ENCODE measurements at regions of chr1 and their contacts with region 1.

Region 1: DNA sequence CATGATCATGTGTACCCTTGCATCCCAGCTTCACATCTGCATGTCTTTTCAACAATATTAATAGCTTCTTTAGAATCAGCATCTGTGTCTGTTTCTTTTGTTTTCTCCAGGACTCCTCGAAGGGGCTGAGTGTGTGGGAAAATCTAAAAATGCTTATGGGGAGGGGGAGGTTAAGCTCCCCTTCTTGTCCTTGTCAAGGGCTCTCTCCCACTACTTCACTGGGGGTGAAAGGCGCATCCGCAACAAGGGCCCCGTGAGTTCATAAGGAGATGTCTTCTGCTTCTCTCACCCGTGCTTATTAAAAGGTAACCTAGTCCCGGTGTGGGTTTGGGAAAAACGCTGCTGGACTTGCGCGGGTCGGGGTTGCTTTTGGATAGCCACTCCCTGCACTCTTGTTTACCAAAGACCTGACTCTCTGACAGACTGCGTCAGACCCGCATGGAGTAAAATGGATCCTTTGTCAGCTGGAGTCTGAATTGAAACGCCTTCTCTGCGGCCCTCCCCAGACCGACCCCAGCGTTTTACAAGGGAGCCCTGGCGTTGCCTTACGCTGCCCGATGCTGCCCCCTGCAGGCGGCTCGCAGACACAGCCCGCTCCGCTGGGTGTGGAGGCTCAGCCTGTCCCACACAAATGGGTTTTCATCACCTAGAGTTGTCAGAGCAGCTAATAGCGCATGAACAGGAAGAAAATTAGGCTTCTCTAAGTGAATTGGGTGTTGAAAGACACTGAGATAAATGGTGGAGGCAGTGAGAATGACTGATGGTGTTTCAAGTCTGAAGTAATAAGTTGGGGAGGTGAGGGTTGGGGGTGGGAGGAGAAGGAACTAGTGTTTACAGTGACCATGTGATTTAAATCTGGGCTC is 53.8 kb downstream of the IER5 start:
- DNase-seq: peak; percentile 23
- H3K4me3 ChIP-seq: 0 out of 2 replicates have a peak overlapping the region, but pooled peaks have one; percentile 3
- H3K27me3 ChIP-seq: no peaks in the 10 kb centered on the region
- CTCF ChIP-seq: peak; percentile 98

Region 2: DNA sequence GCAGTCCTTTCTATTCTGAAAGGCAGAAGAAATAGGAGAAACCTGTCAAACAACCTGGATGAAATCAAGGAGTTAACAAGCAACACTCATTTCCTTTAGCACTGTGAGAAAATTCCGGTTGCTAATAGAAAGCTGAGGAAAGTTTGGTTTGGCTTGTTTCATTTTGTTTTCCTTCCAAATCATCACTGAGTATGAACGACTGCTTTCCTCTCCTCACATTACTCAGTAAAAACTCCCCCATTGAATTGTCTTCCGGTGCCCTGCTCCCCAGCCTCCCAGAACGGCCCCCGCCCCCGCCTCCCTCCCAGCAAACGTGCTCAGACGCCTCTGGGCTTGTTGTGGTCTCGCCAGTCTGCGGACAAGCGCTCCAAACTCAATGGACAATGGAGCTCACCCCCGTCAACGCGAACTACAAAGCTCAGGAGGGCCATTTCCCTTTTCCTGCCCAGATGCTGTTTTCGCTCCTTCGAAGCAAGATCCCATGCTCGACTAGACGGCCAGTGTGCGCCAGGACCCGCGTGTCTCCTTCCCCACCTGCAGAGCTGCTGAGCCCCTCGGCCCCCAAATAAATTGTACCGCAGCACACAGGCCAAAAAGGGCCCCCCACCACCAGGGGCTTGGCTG is 120.4 kb before region 1 on chr1:
- CTCF ChIA-PET with region 1: interaction called, 23 read pairs
- POLR2A ChIA-PET with region 1: no interaction called
- DNase-seq: no peak
- H3K4me3 ChIP-seq: peak overlapping the region; percentile 84
- H3K27me3 ChIP-seq: no peaks in the 10 kb centered on the region
- CTCF ChIP-seq: no peak

Region 3: DNA sequence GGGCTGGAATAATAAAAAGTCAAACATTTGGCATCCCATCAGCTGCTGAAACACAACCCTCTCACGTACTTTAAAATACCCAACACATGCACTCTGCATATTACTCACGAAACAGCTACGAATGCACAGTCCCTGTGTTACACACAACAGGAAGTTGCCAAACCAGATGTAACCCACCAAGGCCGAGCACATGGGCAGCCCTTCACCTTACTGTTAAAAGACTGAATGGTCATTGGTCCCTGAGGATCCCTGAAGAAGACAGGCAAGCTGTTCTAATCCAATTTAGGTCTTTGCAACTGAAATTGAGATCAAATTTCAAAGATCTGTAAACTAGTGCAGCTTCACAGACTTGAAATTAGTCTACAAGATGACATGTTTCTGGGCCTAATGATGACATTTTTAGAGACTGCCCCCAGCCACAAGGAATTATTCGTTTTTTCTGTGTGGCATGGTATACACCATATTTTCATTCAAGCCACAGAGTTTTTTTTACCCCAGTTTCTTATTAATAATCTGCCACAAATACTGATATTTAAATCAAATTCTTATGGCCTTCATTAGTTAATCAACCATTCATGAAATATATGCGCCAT is 79.4 kb before region 1 on chr1:
- CTCF ChIA-PET with region 1: interaction called, 11 read pairs
- POLR2A ChIA-PET with region 1: no interaction called
- DNase-seq: peak; percentile 60
- H3K4me3 ChIP-seq: no peak overlapping the region
- H3K27me3 ChIP-seq: no peaks in the 10 kb centered on the region
- CTCF ChIP-seq: no peak

Region 4: DNA sequence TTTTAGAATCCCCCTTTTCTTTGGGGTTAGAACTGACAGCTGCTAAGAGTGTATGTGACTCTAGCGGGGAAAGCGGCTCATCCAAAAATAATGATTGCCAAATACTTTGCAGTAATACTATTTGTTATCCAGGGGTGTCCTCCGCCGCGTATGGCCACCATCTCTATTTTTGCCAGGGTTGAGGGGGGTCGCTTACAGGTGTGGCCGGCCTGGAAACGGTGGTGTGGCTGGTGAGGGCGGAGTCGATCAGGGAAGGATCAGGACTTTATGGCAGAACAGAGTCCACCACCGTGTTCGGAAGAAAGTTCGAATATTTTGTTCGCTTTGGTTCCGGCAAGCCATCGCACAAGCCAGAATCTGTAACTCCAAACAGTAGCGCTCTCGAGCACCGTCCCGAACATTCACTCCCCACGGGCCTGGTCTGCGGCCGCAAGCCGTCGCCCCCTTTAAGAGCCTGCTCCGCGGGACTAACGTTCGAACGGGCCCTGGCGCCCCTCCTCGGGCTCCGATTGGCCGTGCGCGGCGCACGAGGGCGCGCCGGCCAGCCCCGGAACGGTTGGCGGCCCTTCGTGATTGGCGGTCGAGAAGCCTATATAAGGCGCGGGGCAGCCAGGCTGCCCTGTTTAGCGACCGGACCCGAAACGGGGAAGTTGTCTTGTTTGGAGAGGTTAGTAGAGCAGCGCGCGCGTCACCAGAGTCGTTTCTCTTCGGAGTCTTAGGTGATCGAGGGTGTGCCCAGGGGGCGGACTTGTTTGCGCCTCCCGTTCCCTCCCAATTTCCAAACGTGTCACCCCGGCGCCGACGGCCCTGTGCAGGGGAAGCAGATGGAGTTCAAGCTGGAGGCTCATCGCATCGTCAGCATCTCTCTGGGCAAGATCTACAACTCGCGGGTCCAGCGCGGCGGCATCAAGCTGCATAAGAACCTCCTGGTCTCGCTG is 54.0 kb before region 1 on chr1 and contains the start of gene IER5:
- CTCF ChIA-PET with region 1: interaction called, 111 read pairs
- POLR2A ChIA-PET with region 1: interaction called, 26 read pairs
- DNase-seq: peak; percentile 76
- H3K4me3 ChIP-seq: peak within 1 kb of the TSS; percentile 84
- H3K27me3 ChIP-seq: no peaks in the 10 kb centered on the region
- CTCF ChIP-seq: no peak
- polyA plus RNA-seq, gene IER5: 16.0 and 16.9 TPM in 2 replicates

Region 5: DNA sequence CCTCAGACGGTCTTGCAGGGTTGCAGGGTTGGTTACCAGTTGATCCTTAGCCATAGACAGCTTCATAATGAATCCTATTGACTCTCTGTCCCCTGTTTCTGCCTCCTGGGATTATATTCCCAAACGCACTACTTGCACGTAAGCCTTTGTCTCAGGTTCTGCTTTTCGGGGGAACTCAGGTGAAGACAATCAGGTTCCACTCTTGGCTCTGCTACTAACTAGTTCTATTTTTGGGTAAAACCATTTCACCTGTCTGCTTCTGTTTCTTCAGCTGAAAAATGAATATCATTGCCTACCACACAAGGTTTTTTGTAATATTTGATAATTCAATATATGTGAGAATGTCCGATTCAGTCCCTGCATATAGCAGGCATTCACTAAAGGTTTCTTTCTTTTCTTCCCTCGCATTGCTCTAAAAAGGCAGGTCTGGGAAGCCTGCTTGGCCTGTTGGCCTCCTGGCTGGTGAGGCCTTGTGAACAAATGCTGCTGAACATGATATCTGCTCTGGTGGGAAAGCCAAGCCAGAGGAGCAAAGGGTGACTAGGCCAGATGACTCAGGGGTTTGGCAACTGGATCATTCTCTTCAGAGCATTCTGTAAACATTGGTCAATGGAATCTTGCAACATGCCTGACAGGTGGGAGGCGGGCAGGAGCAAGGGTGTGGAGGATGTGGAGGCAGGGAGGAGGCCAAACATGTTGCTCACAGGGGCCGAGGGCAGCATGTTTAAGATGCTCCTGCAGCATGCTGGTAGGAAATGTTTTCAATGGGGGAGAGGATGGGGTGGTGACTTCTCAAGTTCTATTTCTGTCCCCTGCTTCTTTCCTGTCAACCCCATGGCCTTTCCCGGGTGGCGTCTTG is 30.0 kb before region 1 on chr1:
- CTCF ChIA-PET with region 1: interaction called, 17 read pairs
- POLR2A ChIA-PET with region 1: no interaction called
- DNase-seq: peak; percentile 98
- H3K4me3 ChIP-seq: no peak overlapping the region
- H3K27me3 ChIP-seq: no peaks in the 10 kb centered on the region
- CTCF ChIP-seq: no peak

Region 6: DNA sequence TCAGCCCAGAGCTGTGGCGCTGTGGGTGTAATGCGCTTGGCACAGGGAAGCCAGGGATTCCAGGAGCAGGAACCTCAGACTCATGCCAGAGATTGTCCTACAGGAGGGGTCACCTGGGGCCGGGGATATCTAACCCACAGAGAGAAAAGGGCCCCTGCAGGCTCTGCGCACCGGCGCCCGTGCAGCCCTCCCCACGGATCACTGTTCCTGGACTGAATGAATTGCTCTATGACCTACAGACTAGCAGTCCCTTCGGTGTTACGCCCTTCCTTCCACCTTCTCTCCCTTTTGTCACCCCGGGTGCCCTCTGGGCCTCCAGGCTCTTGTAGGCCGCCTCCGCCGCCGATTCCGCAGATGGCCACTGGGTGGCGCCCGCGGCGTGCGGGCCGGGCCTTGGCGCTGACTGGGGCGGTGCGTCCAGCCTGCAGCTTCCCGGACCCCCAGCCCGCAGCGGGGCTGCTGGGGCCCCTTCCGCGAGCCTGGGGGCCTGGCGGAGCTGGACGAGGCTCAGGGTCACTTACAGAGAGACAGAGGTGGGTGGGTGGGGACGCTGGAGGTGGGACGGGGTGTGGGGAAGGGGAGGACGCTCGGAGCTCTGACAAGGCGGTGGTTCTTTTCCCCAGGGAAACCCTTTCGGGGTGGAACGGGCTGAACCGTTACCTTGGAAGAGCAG is 47.5 kb after region 1 on chr1:
- CTCF ChIA-PET with region 1: no interaction called
- POLR2A ChIA-PET with region 1: no interaction called
- DNase-seq: no peak
- H3K4me3 ChIP-seq: peak overlapping the region; percentile 22
- H3K27me3 ChIP-seq: peaks cover 6% of the 10 kb centered on the region
- CTCF ChIP-seq: peak; percentile 90

Region 7: DNA sequence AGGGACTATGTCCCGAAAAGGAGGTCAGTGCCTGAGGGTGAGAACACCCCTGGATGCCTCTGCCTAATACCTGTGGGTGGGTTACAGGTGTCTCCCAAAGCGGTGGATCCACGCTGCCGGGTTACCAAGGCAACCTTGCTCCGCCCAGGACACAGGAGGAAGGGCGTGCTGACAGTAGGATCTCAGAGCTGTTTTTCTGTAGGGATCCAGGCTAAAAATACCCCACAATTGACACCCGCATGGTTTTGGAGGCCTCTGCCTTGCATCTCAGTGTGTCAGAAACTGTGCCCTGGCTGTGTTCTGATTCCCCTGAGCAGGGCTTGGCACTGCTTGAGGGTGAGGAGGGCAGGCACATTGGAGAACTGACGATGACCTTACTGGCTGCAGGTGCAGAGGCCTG is 64.2 kb after region 1 on chr1:
- CTCF ChIA-PET with region 1: no interaction called
- POLR2A ChIA-PET with region 1: no interaction called
- DNase-seq: no peak
- H3K4me3 ChIP-seq: no peak overlapping the region
- H3K27me3 ChIP-seq: peaks cover 4% of the 10 kb centered on the region
- CTCF ChIP-seq: no peak

Measured in BJ (cell line).